AG04450 (cell line): ENCODE measurements at regions of chr2 and their contacts with region 1.

Region 1: DNA sequence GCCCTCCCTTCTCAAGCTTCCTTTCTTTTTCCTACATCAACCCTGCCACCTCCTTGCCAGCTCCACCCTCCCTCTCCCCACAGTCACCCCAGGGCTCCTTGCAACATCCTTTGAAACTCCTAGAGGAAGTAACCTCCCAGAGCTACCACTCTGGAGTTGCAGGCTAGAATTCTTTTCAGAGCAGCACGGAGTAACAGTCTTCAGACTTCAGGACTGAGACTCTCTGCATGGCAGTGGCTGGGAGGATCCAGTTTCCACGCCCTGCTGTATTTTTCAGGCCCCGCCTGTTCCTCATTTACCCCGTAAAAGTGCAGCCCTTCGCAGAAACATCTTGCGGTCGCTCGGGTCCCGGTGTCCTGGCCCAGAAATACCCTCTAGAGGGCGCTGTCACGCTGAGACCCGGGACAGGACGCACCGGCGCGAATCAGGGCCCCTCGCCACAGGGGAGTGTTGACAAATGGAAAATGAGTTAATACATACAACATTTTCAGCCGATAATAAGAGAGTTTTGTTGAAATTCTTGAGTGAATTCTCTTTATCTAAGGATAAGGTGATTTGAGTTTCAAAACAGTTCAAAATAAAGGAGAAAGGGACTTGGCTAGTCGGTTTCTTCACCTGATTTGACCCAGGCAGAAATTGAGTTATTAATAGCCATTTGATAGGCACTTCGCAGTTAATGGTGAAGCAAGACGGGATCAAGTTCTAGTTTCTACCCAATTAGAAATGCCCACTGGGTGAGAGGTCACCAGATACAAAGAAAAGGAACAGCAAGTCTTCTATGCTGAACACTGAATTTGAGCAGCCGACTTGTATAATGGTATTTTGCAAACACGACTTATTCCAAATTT is 18.5 kb upstream of the NTSR2 start:
- DNase-seq: peak; percentile 50
- H3K4me3 ChIP-seq: peak overlapping the region; percentile 39
- H3K27ac ChIP-seq: peak overlapping the region; percentile 39
- H3K27me3 ChIP-seq: peaks cover 21% of the 10 kb centered on the region
- CTCF ChIP-seq: peak; percentile 82

Region 2: DNA sequence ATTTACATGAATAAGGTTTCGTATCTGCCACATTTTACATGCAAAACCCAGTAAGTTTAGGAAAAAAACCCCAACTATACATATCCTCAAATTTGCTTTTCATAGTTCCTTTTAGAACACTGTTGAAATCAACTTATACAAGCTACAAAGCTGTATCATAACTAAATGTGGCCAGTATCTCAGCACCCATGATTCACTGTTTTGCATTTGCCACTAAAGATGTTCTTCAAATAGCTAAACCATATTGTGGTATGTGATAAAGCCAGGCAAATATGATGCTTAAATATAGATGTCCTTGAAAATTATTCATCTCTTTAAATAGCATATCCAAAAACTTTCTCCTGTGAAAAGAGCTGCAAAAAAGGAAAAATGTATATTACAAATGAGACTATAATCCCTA is 374.0 kb before region 1 on chr2:
- CTCF ChIA-PET with region 1: no interaction called
- POLR2A ChIA-PET with region 1: no interaction called
- DNase-seq: no peak
- H3K4me3 ChIP-seq: no peak overlapping the region
- H3K27ac ChIP-seq: no peak overlapping the region
- H3K27me3 ChIP-seq: no peaks in the 10 kb centered on the region
- CTCF ChIP-seq: no peak

Region 3: DNA sequence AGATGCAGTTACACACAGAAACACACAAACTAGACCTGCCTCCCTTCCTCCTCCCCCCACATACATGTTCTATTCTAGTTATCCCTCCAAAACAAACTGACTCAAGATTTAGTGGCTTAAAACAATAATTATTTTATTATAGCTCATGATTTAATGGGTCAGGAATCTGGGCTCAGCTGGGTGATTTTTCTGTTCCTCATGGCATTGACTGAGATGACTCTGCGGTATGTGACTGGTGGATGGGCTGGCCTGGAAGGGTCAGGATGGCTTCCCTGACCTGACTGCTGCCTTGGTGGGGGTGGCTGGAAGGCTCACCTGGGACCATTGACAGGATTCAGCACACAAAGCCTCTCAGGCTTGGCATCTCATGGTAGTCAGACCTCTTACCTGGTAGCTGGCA is 15.3 kb after region 1 on chr2:
- CTCF ChIA-PET with region 1: interaction called, 30 read pairs
- POLR2A ChIA-PET with region 1: interaction called, 3 read pairs
- DNase-seq: no peak
- H3K4me3 ChIP-seq: no peak overlapping the region
- H3K27ac ChIP-seq: no peak overlapping the region
- H3K27me3 ChIP-seq: no peaks in the 10 kb centered on the region
- CTCF ChIP-seq: no peak

Region 4: GRCh38 chr2:11710234-11710975 is 22.0 kb after region 1 on chr2:
- CTCF ChIA-PET with region 1: interaction called, 30 read pairs
- POLR2A ChIA-PET with region 1: no interaction called
- DNase-seq: peak; percentile 63
- H3K4me3 ChIP-seq: no peak overlapping the region
- H3K27ac ChIP-seq: peak overlapping the region; percentile 53
- H3K27me3 ChIP-seq: no peaks in the 10 kb centered on the region
- CTCF ChIP-seq: no peak

Region 5: GRCh38 chr2:11716689-11717321 is 28.4 kb after region 1 on chr2:
- CTCF ChIA-PET with region 1: interaction called, 30 read pairs
- POLR2A ChIA-PET with region 1: no interaction called
- DNase-seq: no peak
- H3K4me3 ChIP-seq: no peak overlapping the region
- H3K27ac ChIP-seq: no peak overlapping the region
- H3K27me3 ChIP-seq: peaks cover 22% of the 10 kb centered on the region
- CTCF ChIP-seq: no peak

Region 6: GRCh38 chr2:11738589-11739436 is 50.4 kb after region 1 on chr2:
- CTCF ChIA-PET with region 1: interaction called, 12 read pairs
- POLR2A ChIA-PET with region 1: no interaction called
- DNase-seq: peak; percentile 53
- H3K4me3 ChIP-seq: no peak overlapping the region
- H3K27ac ChIP-seq: peak overlapping the region; percentile 48
- H3K27me3 ChIP-seq: peaks cover 4% of the 10 kb centered on the region
- CTCF ChIP-seq: peak; percentile 66

Region 7: DNA sequence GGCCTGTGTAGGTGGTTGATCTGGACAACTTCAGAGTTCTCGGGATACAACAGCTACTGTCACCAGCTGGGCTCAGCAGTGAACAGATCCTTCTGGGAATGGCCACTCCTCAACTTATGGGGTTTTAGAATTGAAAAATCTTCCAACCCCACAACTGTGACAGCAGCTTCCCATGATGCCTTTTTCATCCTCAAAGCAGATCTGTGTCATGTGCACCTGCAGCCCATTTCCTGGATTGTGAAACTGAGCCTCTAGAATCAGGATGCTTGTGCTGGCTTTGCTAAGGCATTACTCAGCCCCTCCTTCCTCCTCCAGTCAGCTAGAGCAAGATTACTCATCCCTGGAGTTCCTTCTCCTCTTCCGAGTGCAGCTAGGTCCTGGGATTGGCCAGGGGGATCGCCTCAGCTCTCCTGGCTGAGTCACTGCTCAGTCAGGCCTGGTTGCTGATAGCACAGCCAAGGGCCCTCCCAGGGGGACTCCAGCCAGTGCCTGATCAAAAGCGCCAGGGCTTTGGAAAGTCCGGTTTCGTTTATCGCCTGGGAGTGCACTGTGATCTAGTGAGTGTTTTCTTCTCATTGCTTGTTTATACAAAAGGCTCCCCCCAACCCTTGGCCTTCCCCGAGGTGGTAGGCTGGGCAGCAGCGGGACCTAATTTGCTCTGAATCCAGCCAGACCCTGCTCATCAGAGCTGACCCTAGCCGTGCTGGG is 55.6 kb after region 1 on chr2:
- CTCF ChIA-PET with region 1: interaction called, 12 read pairs
- POLR2A ChIA-PET with region 1: no interaction called
- DNase-seq: peak; percentile 99
- H3K4me3 ChIP-seq: peak overlapping the region; percentile 52
- H3K27ac ChIP-seq: peak overlapping the region; percentile 90
- H3K27me3 ChIP-seq: no peaks in the 10 kb centered on the region
- CTCF ChIP-seq: no peak

Region 8: DNA sequence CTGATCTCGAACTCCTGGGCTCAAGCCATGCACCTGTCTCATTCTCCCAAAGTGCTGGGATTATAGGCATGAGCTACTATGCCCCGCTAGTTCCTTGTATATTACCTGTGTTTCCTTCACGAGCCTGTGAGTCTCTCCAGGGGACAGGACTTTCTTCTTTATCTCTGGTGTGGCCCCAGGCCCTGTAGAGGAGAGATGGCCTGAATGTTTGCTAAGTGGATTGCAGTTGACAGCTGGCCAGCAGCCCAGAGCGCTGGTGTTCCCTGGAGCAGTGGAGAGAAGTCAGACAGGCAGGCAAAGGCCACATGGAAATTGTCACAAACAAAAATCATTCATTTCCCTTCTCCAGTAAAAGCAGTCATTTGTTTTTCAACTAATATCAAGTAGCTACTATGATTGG is 75.9 kb after region 1 on chr2:
- CTCF ChIA-PET with region 1: interaction called, 10 read pairs
- POLR2A ChIA-PET with region 1: no interaction called
- DNase-seq: no peak
- H3K4me3 ChIP-seq: no peak overlapping the region
- H3K27ac ChIP-seq: no peak overlapping the region
- H3K27me3 ChIP-seq: no peaks in the 10 kb centered on the region
- CTCF ChIP-seq: no peak

Region 9: DNA sequence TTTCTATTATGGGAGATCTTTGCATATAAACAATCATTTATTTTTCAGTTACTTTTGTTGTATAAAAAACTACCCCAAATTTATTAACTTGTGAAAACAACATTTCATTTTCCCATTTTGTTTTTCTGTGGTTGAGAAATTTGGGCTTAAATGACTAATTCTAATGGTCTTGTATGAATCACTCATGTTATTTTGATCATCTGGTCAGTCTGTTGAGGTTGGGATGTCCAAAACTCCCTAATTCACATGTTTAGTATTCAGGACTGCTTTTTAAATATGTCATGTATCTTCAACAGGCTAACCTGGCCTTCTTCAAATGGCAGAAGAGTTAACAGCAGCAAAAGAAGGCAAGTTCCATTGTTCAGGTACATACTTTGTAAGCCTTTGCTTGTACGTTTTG is 1816.4 kb after region 1 on chr2:
- CTCF ChIA-PET with region 1: no interaction called
- POLR2A ChIA-PET with region 1: no interaction called
- DNase-seq: no peak
- H3K4me3 ChIP-seq: no peak overlapping the region
- H3K27ac ChIP-seq: no peak overlapping the region
- H3K27me3 ChIP-seq: no peaks in the 10 kb centered on the region
- CTCF ChIP-seq: no peak